HEK293 (cell line): ENCODE measurements at regions of chr9 and their contacts with region 1.

Region 1: DNA sequence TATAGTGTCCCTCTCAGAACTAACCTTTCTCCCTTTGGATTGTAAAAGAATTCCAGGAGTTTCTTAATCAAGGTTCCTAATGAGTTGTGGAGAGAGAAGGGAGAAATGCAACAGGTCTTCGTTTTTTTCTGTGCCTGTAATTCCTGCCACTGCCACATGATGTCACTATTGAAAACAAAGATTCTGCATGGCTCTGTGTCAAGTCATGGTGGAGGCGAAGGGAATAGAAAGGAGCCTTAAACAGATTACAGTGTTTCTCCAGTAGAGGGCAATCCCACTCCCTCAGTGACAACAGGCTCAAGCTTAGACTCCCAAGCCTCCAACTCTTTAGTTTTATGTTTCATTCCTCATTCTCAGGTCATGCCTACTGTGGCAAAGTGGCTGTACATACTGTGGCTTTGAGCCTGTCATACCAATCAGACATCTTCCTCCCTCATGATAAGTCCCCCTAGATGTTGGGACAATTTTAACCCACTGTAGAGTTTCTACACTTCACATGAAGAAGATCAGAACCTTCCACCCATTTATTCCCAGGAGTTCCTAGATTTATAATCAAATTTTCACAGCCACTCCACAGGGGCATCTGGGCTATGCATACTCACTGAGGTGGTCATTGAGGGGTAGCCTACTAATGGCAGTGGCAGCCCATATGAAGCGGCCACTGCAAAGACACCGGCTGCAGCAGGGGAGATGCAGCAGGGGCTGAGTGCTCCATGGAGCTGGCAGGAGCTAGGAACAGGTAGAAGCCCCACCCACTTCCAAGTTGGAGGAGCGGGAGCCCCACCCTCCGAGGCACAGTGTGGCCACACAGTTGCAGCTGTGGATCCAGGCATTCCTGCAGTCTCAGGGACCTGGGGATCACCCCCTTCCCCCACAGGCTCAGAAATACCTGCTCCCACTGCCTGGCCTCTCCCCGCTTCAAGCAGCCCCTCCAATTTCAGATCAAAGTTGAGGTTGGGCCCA is 97.4 kb upstream of the TRIM32 start:
- H3K4me3 ChIP-seq: no peak overlapping the region
- H3K27ac ChIP-seq: no peak overlapping the region
- H3K4me1 ChIP-seq: no peaks in the 10 kb centered on the region
- CTCF ChIP-seq: no peak

Region 2: DNA sequence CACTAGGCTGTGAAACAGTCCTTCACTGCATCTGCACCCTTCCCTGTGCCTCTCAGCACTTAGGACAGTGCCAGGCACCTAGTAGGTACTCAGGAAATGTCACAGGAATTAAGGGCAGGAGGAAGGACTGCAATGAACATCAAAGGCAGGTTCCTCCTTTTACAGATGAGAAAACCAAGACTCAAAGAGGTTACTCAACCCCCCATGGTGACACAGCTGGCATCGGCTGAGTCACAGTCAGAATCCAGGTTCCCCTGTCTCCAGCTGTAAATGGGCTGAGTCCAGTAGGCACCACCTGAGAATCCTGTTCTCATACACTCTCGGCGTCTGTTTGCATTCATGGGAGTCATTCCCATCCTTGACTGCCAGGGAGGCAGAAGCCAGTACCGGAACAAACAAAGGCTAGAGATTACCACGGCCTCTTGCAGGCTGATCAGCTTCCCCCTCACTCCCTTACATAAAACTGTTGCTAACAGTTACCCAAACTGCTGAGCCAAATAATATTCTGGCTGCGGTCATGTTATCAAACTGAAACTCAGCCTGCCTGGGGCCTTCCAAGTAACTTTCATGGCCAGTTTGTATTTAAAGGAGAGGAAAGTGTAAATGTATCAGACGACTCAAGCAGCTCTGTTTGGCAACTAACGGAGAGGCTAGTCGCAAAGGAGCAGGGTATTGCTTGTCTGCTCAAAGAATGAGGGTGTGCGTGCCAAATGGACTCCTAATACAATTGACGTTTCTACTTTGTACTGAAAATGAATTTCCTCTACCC is 234.3 kb before region 1 on chr9:
- CTCF ChIA-PET with region 1: no interaction called
- POLR2A ChIA-PET with region 1: no interaction called
- H3K4me3 ChIP-seq: no peak overlapping the region
- H3K27ac ChIP-seq: no peak overlapping the region
- H3K4me1 ChIP-seq: no peaks in the 10 kb centered on the region
- CTCF ChIP-seq: no peak

Region 3: GRCh38 chr9:116646661-116647512 is 57.2 kb after region 1 on chr9:
- CTCF ChIA-PET with region 1: interaction called, 19 read pairs
- POLR2A ChIA-PET with region 1: no interaction called
- H3K4me3 ChIP-seq: no peak overlapping the region
- H3K27ac ChIP-seq: no peak overlapping the region
- H3K4me1 ChIP-seq: no peaks in the 10 kb centered on the region
- CTCF ChIP-seq: peak; percentile 37; the same call in 1 of the 2 replicates